Spleen (tissue), 13 donors: ENCODE measurements at regions of chr11 and their contacts with region 1.

Region 1: GRCh38 chr11:64846998-64847666 is 2.7 kb upstream of the CDC42BPG start:
- DNase-seq: peak; percentile 99
- H3K4me3 ChIP-seq: no peak overlapping the region
- H3K27ac ChIP-seq: peak overlapping the region in 5 of 8 donors; percentile 52 to 98 (median 93)
- H3K4me1 ChIP-seq: peaks cover 44 to 91% (median 77%) of the 10 kb centered on the region in 6 donors
- H3K27me3 ChIP-seq: no peaks in the 10 kb centered on the region
- CTCF ChIP-seq: peak; percentile 96 to 100 (median 98)
- POLR2A ChIP-seq: no peak

Region 2: GRCh38 chr11:64767344-64768299 is 79.5 kb before region 1 on chr11:
- intact Hi-C with region 1: no loop called
- DNase-seq: peak; percentile 91
- H3K4me3 ChIP-seq: peak overlapping the region in 1 of 8 donors; percentile 20
- H3K27ac ChIP-seq: peak overlapping the region; percentile 36 to 91 (median 65)
- H3K4me1 ChIP-seq: peaks cover 61 to 100% (median 90%) of the 10 kb centered on the region in 6 donors
- H3K27me3 ChIP-seq: no peaks in the 10 kb centered on the region
- CTCF ChIP-seq: peak; percentile 54 to 84 (median 81)
- POLR2A ChIP-seq: no peak

Region 3: GRCh38 chr11:64787526-64788320 is 59.4 kb before region 1 on chr11:
- intact Hi-C with region 1: loop called (anchors 10 kb)
- DNase-seq: peak; percentile 90
- H3K4me3 ChIP-seq: no peak overlapping the region
- H3K27ac ChIP-seq: peak overlapping the region in 6 of 8 donors; percentile 18 to 56 (median 38)
- H3K4me1 ChIP-seq: peaks cover 0 to 38% (median 17%) of the 10 kb centered on the region in 6 donors
- H3K27me3 ChIP-seq: no peaks in the 10 kb centered on the region
- CTCF ChIP-seq: peak; percentile 17 to 81 (median 67)
- POLR2A ChIP-seq: no peak

Region 4: GRCh38 chr11:64894070-64894796 is 47.1 kb after region 1 on chr11:
- intact Hi-C with region 1: loop called (anchors 2 kb)
- DNase-seq: peak; percentile 98
- H3K4me3 ChIP-seq: no peak overlapping the region
- H3K27ac ChIP-seq: peak overlapping the region in 6 of 8 donors; percentile 4 to 72 (median 34)
- H3K4me1 ChIP-seq: peaks cover 15 to 39% (median 26%) of the 10 kb centered on the region in 6 donors
- H3K27me3 ChIP-seq: no peaks in the 10 kb centered on the region
- CTCF ChIP-seq: peak; percentile 89 to 98 (median 96)
- POLR2A ChIP-seq: no peak

Region 5: DNA sequence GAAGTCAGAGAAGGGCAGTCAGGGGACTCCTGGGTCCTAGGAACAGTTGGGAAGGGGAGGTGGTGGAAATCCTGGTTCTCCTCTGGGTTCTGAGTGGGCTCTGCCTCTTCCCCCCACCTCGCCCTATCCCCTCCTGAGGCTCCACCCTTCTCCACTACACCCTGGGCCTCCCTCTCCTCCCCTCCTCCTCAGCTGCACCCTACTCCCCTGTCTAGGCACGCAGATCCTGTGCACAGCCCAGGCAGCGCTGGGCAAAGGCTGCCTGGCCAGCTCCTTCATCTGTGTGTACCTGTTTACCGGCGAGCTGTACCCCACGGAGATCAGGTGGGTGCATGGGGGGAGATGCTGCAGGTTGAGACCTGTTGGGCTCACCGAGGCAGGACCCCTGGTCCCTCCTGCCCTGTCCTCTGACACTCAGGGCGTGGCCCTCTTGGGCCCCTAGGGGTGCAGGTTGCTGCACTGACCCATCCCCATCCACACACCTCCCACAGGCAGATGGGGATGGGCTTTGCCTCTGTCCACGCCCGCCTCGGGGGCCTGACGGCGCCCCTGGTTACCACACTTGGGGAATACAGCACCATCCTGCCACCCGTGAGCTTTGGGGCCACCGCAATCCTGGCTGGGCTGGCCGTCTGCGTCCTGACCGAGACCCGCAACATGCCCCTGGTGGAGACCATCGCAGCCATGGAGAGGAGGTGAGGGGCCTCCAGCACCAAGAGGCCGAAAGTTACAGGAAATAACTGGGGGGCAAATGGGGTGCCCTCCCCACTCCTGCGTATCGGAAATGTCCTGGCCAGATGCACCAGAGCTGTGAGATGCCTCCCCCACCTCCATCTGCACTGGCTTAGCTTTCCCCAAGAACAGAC is 389.3 kb after region 1 on chr11:
- intact Hi-C with region 1: no loop called
- DNase-seq: peak; percentile 65
- H3K4me3 ChIP-seq: no peak overlapping the region
- H3K27ac ChIP-seq: no peak overlapping the region
- H3K4me1 ChIP-seq: no peaks in the 10 kb centered on the region
- H3K27me3 ChIP-seq: no peaks in the 10 kb centered on the region
- CTCF ChIP-seq: no peak
- POLR2A ChIP-seq: no peak